CD8-positive, alpha-beta T cell (primary cell): ENCODE measurements at regions of chr10 and their contacts with region 1.

Region 1: GRCh38 chr10:101018600-101019439 is 12.1 kb downstream of the PDZD7 start:
- DNase-seq: peak; percentile 51 to 79 (median 73)
- ATAC-seq: peak; percentile 78
- H3K4me3 ChIP-seq: no peak overlapping the region
- H3K4me3 Mint-ChIP-seq: no peak overlapping the region
- H3K27ac ChIP-seq: no peak overlapping the region
- H3K27ac Mint-ChIP-seq: no peak overlapping the region
- H3K4me1 ChIP-seq: no peaks in the 10 kb centered on the region
- H3K4me1 Mint-ChIP-seq: peaks cover 4% of the 10 kb centered on the region
- H3K27me3 ChIP-seq: peaks cover 16 to 22% of the 10 kb centered on the region in 2 experiments
- H3K27me3 Mint-ChIP-seq: peaks cover 51% of the 10 kb centered on the region
- CTCF ChIP-seq: peak; percentile 58

Region 2: GRCh38 chr10:100614429-100615095 is 404.3 kb before region 1 on chr10:
- CTCF ChIA-PET with region 1: no interaction called
- POLR2A ChIA-PET with region 1: no interaction called
- intact Hi-C with region 1: no loop called
- DNase-seq: peak in 1 of 9 experiments; percentile 27
- ATAC-seq: no peak
- H3K4me3 ChIP-seq: no peak overlapping the region
- H3K4me3 Mint-ChIP-seq: no peak overlapping the region
- H3K27ac ChIP-seq: no peak overlapping the region
- H3K27ac Mint-ChIP-seq: no peak overlapping the region
- H3K4me1 ChIP-seq: no peaks in the 10 kb centered on the region
- H3K4me1 Mint-ChIP-seq: no peaks in the 10 kb centered on the region
- H3K27me3 ChIP-seq: peaks cover 2% of the 10 kb centered on the region in 2 experiments
- H3K27me3 Mint-ChIP-seq: peaks cover 51% of the 10 kb centered on the region
- CTCF ChIP-seq: no peak

Region 3: GRCh38 chr10:100817268-100817839 is 201.5 kb before region 1 on chr10:
- CTCF ChIA-PET with region 1: no interaction called
- POLR2A ChIA-PET with region 1: no interaction called
- intact Hi-C with region 1: no loop called
- DNase-seq: no peak
- ATAC-seq: no peak
- H3K4me3 ChIP-seq: no peak overlapping the region
- H3K4me3 Mint-ChIP-seq: no peak overlapping the region
- H3K27ac ChIP-seq: no peak overlapping the region
- H3K27ac Mint-ChIP-seq: no peak overlapping the region
- H3K4me1 ChIP-seq: no peaks in the 10 kb centered on the region
- H3K4me1 Mint-ChIP-seq: no peaks in the 10 kb centered on the region
- H3K27me3 ChIP-seq: no peaks in the 10 kb centered on the region
- H3K27me3 Mint-ChIP-seq: peaks cover 48% of the 10 kb centered on the region
- CTCF ChIP-seq: no peak

Region 4: GRCh38 chr10:100934084-100934659 is 84.6 kb before region 1 on chr10:
- CTCF ChIA-PET with region 1: no interaction called
- POLR2A ChIA-PET with region 1: no interaction called
- intact Hi-C with region 1: no loop called
- DNase-seq: peak in 2 of 9 experiments; percentile 8 to 30
- ATAC-seq: peak; percentile 36
- H3K4me3 ChIP-seq: no peak overlapping the region
- H3K4me3 Mint-ChIP-seq: no peak overlapping the region
- H3K27ac ChIP-seq: no peak overlapping the region
- H3K27ac Mint-ChIP-seq: no peak overlapping the region
- H3K4me1 ChIP-seq: no peaks in the 10 kb centered on the region
- H3K4me1 Mint-ChIP-seq: no peaks in the 10 kb centered on the region
- H3K27me3 ChIP-seq: no peaks in the 10 kb centered on the region
- H3K27me3 Mint-ChIP-seq: no peaks in the 10 kb centered on the region
- CTCF ChIP-seq: peak; percentile 49

Region 5: DNA sequence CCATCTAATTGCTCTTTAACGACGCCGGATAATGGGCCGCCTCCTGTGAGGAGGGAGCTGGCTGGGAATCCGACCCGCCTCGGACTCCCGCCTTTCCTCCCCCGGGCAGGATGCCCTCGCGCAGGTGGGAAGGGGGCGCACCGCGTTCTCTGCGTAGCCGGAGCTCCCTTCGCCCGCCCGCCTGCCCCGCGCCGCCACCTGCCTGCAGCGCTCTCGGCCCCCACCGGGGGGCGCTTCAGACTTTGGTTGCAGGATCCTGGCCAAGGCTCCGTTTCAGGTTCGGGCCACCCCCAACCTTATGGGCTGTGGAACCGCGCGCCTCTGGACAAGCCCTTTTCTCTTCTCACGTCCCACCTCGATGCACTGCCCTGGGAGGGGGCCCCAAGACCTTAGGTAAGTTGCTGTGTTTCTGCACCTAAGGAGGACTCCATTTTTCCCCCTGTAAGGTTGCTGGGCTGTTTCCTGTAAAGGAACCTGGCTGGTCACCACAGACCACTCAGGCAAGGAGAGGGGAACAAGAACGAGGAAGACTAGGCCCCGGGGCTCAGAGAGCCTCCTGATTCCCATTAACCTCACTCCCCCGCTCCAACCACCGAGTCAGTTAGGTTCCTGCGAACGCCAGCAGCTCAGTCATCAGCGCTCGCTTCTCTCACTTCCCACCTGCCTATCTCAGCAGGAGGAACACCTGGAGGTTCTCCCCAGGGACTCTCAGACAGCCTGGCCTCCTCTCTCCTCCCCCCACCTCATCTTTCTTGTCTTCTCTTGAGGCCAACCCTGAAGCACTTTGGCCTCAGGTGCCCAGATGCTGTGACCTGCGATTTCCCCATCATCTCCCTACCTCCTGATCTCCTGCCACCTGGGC is 31.6 kb after region 1 on chr10:
- CTCF ChIA-PET with region 1: interaction called, 15 read pairs
- POLR2A ChIA-PET with region 1: no interaction called
- intact Hi-C with region 1: no loop called
- DNase-seq: peak; percentile 65 to 83 (median 78)
- ATAC-seq: peak; percentile 98
- H3K4me3 ChIP-seq: no peak overlapping the region
- H3K4me3 Mint-ChIP-seq: peak overlapping the region; percentile 32
- H3K27ac ChIP-seq: no peak overlapping the region
- H3K27ac Mint-ChIP-seq: no peak overlapping the region
- H3K4me1 ChIP-seq: peaks cover 9% of the 10 kb centered on the region
- H3K4me1 Mint-ChIP-seq: peaks cover 9% of the 10 kb centered on the region
- H3K27me3 ChIP-seq: peaks cover 13 to 24% of the 10 kb centered on the region in 2 experiments
- H3K27me3 Mint-ChIP-seq: peaks cover 44% of the 10 kb centered on the region
- CTCF ChIP-seq: peak; percentile 73

Region 6: DNA sequence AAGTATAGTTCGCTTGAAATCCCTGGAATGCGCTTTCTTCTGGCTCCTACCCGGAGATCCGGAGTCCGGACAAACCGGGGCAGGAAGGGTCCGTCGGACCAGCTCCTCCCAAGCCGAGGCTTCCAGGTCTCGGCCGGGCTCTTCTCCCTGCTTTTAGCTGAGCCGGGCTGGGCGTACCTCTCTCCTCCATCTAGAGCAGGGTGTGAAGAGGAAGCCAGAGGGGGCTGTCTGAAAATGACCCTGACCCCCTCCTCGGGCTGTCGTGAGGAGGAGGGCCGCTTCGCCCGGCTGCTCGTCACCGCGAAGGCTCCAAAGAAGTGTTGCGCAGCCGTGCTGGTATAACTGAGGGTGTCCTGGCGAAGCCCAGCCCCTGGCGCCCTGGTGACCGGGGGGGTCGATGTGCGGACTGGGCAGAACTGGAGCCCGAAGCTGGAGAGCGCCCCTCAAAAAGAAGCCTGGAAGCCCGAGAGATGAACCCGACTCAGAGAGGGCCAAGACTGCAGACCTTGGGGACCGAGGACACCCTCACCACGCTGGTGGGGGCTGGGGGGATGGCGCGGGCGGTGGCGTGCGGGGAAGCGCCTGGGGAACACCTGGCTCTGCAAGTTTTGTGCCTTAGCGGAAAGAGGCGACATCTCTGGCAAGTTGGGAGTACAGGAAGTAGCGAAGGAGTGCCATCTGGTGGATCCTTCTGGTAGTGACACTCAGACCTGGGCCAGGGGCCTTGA is 48.7 kb after region 1 on chr10:
- CTCF ChIA-PET with region 1: interaction called, 35 read pairs
- POLR2A ChIA-PET with region 1: no interaction called
- intact Hi-C with region 1: loop called (anchors 1 kb)
- DNase-seq: peak; percentile 49 to 86 (median 77)
- ATAC-seq: peak; percentile 82
- H3K4me3 ChIP-seq: peak overlapping the region; percentile 59 to 64
- H3K4me3 Mint-ChIP-seq: peak overlapping the region; percentile 91
- H3K27ac ChIP-seq: no peak overlapping the region
- H3K27ac Mint-ChIP-seq: no peak overlapping the region
- H3K4me1 ChIP-seq: peaks cover 29% of the 10 kb centered on the region
- H3K4me1 Mint-ChIP-seq: peaks cover 18% of the 10 kb centered on the region
- H3K27me3 ChIP-seq: peaks cover 35 to 39% of the 10 kb centered on the region in 2 experiments
- H3K27me3 Mint-ChIP-seq: peaks cover 41% of the 10 kb centered on the region
- CTCF ChIP-seq: peak; percentile 88